Testis (tissue), 5 donors: ENCODE measurements at regions of chr17 and their contacts with region 1.

Region 1: GRCh38 chr17:21284319-21285163 is at the start of gene MAP2K3:
- DNase-seq: peak; percentile 100
- H3K4me3 ChIP-seq: peak within 1 kb of the TSS; percentile 80 to 88
- H3K27ac ChIP-seq: peak within 1 kb of the TSS; percentile 79 to 89
- H3K4me1 ChIP-seq: peaks cover 40% of the 10 kb centered on the region
- H3K27me3 ChIP-seq: no peaks in the 10 kb centered on the region
- CTCF ChIP-seq: no peak
- POLR2A ChIP-seq: peak; percentile 80
- total RNA-seq, gene MAP2K3: 13.5 to 17.5 TPM

Region 2: GRCh38 chr17:21511363-21512198 is 227.0 kb after region 1 on chr17:
- intact Hi-C with region 1: loop called (anchors 10 kb)
- DNase-seq: peak; percentile 88
- H3K4me3 ChIP-seq: peak overlapping the region; percentile 29 to 58
- H3K27ac ChIP-seq: no peak overlapping the region
- H3K4me1 ChIP-seq: peaks cover 8% of the 10 kb centered on the region
- H3K27me3 ChIP-seq: no peaks in the 10 kb centered on the region
- CTCF ChIP-seq: peak; percentile 64 to 74 (median 65)
- POLR2A ChIP-seq: no peak